Activated CD8-positive, alpha-beta memory T cell treated with anti-CD3 and anti-CD28 coated beads, Interleukin-2, amount 10 ng/mL, durations not matched to agents 7 days and 5 days (primary cell): ENCODE measurements at regions of chr9 and their contacts with region 1.

Region 1: DNA sequence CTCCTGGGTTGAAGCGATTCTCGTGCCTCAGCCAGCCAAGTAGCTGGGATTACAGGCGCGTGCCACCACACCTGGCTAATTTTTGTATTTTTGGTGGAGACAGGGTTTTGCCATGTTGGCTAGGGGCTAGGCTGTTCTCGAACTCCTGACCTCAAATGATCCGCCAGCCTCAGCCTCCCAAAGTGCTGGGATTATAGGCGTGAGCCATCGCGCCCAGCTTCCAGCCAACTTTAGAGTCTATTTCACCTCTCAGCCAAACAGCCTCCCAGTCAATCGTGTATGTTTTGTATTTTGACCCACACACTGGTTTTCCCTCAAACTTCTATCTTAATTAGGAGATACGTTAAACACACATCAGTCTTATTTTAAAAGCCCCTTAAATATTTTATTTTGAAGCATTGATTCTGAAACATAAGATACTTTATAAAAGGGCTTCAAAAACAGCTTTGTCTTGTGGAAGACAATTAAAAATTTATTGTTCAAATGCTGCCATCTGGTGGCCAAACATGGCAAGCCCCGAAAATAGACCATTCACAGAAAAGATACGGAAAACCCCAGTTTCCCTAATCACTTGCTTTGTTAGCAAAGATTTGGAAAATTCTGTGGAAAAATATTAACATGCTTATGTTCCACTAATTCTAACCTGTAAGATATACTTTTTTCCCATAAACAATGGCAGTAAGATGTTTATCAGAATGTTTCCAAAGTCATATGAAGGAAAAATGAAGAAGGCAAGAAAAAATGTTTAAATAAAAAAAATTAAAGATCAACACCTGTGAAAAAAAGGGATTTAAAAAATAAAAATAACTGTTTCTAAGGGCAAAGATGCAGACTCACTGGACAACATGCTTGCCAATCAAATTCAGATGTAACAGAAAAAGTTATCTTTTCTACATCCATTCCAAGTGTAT is 33.1 kb downstream of the APTX start:
- DNase-seq: peak; percentile 63
- ATAC-seq: peak; percentile 27
- H3K4me3 Mint-ChIP-seq: no peak overlapping the region
- H3K27ac Mint-ChIP-seq: no peak overlapping the region
- H3K4me1 Mint-ChIP-seq: no peaks in the 10 kb centered on the region
- H3K27me3 Mint-ChIP-seq: no peaks in the 10 kb centered on the region

Region 2: DNA sequence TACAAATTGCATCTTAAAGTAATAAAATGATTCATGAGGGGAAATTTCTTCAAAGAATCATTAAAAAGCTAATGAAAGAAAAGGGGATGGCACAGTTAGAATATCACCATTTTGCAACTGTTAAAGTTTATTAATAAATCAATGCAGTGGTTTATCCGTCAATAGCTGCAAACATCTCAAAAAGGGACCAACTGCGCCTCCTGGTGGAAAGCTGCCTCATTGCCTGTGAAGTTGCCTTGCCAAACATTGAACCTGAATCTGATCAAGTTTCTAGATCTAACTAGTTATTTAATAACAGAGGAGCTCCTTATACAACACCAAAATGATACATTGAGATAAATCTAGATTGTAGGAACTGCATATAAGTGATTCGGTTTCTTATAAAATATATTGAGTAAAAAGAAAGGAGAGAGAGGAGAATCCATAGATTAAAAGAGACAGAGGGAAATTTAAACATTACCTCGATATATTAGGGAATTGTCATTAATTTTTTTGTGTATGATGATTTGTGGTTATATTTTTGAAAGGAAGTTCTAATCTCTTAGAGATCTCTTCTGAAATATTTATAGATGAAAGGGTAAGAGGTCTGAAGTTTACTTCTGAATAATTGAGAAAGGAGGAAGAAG is 388.5 kb before region 1 on chr9:
- CTCF ChIA-PET with region 1: interaction called, 41 read pairs
- DNase-seq: peak; percentile 84
- ATAC-seq: peak; percentile 81
- H3K4me3 Mint-ChIP-seq: no peak overlapping the region
- H3K27ac Mint-ChIP-seq: no peak overlapping the region
- H3K4me1 Mint-ChIP-seq: peaks cover 17% of the 10 kb centered on the region
- H3K27me3 Mint-ChIP-seq: peaks cover 18% of the 10 kb centered on the region

Region 3: GRCh38 chr9:32589083-32589723 is 379.2 kb before region 1 on chr9:
- CTCF ChIA-PET with region 1: interaction called, 35 read pairs
- DNase-seq: no peak
- ATAC-seq: no peak
- H3K4me3 Mint-ChIP-seq: no peak overlapping the region
- H3K27ac Mint-ChIP-seq: no peak overlapping the region
- H3K4me1 Mint-ChIP-seq: no peaks in the 10 kb centered on the region
- H3K27me3 Mint-ChIP-seq: peaks cover 42% of the 10 kb centered on the region

Region 4: DNA sequence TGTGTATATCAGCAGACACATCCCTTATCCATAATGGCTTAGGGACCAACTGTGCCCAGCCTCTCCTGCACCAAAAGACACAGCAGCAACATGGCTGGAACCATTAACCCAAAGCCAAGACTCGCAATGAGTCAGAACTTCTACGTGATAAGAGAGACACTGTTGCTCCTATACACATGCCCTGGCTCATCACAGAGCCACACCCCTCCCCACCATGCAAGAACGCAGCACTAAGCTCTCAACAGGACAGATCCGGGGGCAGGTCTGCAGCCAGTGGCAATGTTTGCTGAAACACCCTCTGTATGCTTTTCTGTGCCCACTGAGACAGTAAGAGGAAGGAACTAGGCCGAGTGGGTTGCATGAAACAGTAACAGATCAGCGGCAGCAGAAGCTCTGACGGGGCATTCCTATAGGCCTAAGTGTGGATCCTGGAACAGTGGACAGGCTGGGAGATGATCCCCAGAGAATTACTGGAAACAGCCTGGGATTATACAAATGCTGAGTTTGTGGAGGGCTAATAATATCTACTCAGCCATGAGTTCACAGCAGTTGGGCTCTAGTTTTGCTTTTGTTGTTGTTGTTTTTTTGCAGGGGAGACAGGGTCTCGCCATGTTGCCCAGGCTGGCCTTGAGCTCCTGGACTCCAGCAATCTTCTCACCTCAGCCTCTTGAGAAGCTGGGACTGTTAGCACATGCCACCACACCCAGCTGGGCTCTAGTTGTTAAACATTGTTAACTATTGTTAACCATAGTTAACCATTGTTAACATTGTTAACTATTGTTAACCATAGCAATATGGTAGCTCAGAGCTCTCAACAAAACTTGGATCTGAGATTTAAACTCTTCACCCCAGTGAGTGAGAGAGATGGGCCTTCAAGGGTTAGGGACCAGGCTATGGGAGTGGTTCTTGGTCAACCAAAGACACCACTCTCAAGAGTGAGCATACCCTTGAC is 157.8 kb after region 1 on chr9:
- CTCF ChIA-PET with region 1: no interaction called
- DNase-seq: no peak
- ATAC-seq: no peak
- H3K4me3 Mint-ChIP-seq: no peak overlapping the region
- H3K27ac Mint-ChIP-seq: no peak overlapping the region
- H3K4me1 Mint-ChIP-seq: peaks cover 14% of the 10 kb centered on the region
- H3K27me3 Mint-ChIP-seq: no peaks in the 10 kb centered on the region

Region 5: DNA sequence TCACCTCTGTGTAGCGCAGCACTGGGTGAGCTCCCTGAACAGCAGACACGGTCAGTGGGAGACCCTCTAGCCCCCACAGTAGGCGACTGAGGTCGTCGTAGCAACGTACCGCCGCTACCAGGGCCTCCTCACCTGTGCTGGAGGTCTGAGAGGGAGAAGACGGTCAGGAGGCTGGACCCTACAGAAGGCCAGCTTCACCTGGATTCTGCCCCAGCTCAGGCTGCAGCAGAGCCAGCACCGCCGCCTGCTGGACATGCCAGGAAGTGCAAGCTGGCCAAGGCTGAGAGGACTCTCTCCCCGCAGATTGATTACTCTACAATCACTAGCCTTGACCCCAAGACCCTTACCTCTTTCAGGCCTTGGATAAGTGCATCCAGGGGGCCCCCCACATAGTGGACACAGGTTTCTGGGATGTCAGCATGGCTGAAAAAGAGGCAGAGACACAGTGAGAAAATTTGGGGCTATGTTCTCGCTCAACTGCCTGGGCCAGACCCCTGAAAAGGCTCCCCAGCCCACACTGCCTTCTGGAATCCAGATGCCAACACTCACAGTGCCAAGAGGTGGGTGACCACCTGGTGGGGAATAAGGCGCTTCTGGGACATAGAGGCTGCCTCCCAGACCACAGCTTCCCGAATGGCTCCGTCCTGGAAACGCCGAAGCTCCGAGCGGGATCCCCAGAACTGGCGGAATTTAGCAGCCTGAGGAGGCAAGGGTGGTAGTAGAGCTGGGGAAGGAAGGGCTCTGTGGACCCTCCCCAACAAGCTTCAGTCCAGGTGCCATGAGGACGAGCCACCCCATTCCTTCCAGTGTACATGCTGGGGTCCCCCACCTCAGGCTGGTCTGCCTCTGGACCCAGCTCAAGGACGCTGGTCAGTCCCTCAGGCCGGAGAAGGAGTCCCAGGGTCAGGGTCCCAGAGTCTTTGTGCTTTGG is 498.5 kb after region 1 on chr9:
- CTCF ChIA-PET with region 1: no interaction called
- DNase-seq: peak; percentile 78
- ATAC-seq: peak; percentile 81
- H3K4me3 Mint-ChIP-seq: no peak overlapping the region
- H3K27ac Mint-ChIP-seq: no peak overlapping the region
- H3K4me1 Mint-ChIP-seq: peaks cover 8% of the 10 kb centered on the region
- H3K27me3 Mint-ChIP-seq: no peaks in the 10 kb centered on the region